ENCODE measurements at regions of chr17 and their contacts with region 1.

Region 1: GRCh38 chr17:18191967-18192366 is 8.3 kb downstream of the ALKBH5 start:
- DNase-seq: peak in 1 of 2 experiments; percentile 61
- H3K4me3 ChIP-seq: no peak overlapping the region
- H3K27ac ChIP-seq: no peak overlapping the region
- H3K4me1 ChIP-seq: peaks cover 0 to 3% (median 1%) of the 10 kb centered on the region in 4 experiments; a peak in 2 of 7 replicates
- H3K27me3 ChIP-seq: no peaks in the 10 kb centered on the region
- CTCF ChIP-seq: peak; percentile 38 to 56 (median 55)
- EP300 ChIP-seq: no peak
- POLR2A ChIP-seq: no peak
- RAD21 ChIP-seq: peak; percentile 42 to 64; a peak in 3 of 4 replicates

Region 2: GRCh38 chr17:18203308-18203707 is 11.3 kb after region 1 on chr17:
- CTCF ChIA-PET with region 1: interaction called, 78 read pairs
- POLR2A ChIA-PET with region 1: interaction called, 34 read pairs
- DNase-seq: no peak
- H3K4me3 ChIP-seq: no peak overlapping the region
- H3K27ac ChIP-seq: 0 out of 2 replicates have a peak overlapping the region, but pooled peaks have one; percentile 32
- H3K4me1 ChIP-seq: peaks cover 0 to 8% (median 5%) of the 10 kb centered on the region in 4 experiments; a peak in 5 of 7 replicates
- H3K27me3 ChIP-seq: no peaks in the 10 kb centered on the region
- CTCF ChIP-seq: no peak
- EP300 ChIP-seq: no peak
- POLR2A ChIP-seq: no peak
- RAD21 ChIP-seq: no peak

Region 3: GRCh38 chr17:18217412-18218015 is 25.5 kb after region 1 on chr17:
- CTCF ChIA-PET with region 1: interaction called, 41 read pairs
- POLR2A ChIA-PET with region 1: interaction called, 4 read pairs
- DNase-seq: peak in 1 of 2 experiments; percentile 96
- H3K4me3 ChIP-seq: no peak overlapping the region
- H3K27ac ChIP-seq: no peak overlapping the region
- H3K4me1 ChIP-seq: no peaks in the 10 kb centered on the region; a peak in 3 of 7 replicates
- H3K27me3 ChIP-seq: no peaks in the 10 kb centered on the region
- CTCF ChIP-seq: peak; percentile 92 to 99 (median 98)
- EP300 ChIP-seq: no peak
- POLR2A ChIP-seq: no peak
- RAD21 ChIP-seq: peak; percentile 94 to 95

Region 4: DNA sequence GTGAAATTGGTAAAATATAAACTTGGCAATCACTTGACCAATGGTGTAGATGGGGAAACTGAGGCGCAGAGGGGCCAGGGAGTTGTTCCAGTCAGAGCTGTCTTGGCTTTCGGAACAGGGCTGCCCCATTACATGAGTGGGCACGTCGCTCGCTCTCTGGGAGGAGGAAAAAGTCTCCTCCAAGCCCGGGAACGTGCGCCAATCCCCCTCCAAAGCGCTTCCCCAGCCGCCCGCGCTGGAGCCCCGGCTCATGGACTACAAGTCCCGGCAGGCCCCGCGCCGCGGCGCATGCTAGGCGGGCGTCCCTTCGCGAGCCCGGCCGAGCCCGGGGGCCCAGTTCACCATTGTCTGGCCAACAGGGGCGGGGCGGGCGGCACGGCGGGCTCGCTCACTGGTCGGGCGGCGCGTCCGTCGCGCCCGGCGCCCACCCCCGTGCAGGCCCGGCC is 33.2 kb after region 1 on chr17:
- CTCF ChIA-PET with region 1: interaction called, 10 read pairs
- POLR2A ChIA-PET with region 1: interaction called, 3 read pairs
- DNase-seq: peak; percentile 85 to 96
- H3K4me3 ChIP-seq: peak overlapping the region; percentile 70 to 98 (median 79)
- H3K27ac ChIP-seq: peak overlapping the region; percentile 97
- H3K4me1 ChIP-seq: peaks cover 0 to 18% (median 10%) of the 10 kb centered on the region in 4 experiments; a peak in 6 of 7 replicates
- H3K27me3 ChIP-seq: no peaks in the 10 kb centered on the region
- CTCF ChIP-seq: no peak
- EP300 ChIP-seq: no peak
- POLR2A ChIP-seq: no peak
- RAD21 ChIP-seq: no peak

Measured in H1 (cell line).